ENCODE measurements at regions of chr2 and their contacts with region 1.

Region 1: DNA sequence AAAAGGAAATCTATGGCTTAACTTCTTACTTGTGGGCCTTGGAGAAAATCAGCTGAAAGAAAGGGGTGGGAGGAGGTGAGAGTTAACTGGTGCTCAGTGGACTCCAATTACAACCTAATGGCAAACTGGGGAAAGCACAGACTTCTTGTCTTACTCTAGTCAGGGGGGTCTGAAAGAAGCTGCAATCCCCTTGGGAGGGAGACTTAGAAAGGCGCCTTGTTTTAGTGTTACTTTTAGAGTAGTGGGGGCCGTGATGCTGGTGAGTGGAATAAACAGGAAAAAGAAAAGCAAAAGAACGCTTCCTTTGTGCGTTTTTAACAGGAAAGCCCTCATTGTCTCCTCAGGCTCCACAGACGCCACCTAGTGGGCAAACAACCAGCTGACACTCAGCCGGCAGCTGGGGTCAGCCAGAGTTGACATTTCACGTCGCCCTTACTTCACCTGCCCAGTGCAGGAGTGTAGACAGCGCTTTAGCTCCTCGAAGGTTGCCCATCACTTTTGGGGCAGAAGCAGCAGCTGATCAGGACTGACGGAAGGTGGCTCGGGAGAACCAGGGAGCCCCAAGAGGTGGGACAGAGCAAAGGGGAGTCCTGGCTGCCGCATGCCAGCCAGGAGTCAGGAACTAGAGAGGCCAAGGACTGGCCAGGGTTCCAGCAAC is 55.9 kb upstream of the GORASP2 start:
- DNase-seq: peak; percentile 80
- H3K4me3 Mint-ChIP-seq: peak overlapping the region; percentile 51
- H3K27ac Mint-ChIP-seq: peak overlapping the region; percentile 11
- H3K4me1 Mint-ChIP-seq: peaks cover 12% of the 10 kb centered on the region
- H3K27me3 Mint-ChIP-seq: peaks cover 10% of the 10 kb centered on the region

Region 2: DNA sequence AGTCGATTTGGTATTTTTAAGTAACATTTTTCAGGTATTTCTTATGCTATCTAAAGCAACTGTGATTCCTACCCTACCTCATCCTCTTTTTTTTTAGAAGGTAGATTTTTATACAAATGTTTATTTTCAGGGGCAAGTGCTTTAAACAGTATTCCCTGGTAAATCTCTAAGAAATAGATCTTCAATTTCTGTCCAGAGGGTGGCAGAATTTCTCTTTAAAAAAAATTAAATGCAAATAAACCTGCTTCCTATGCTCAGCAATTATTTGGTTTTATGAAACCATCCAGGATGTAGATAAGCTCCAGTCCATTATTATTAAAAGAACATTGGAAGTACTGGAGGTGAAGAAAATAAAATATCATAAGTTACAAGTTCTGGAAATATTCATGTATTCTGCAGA is 503.3 kb before region 1 on chr2:
- CTCF ChIA-PET with region 1: interaction called, 10 read pairs
- POLR2A ChIA-PET with region 1: no interaction called
- DNase-seq: no peak
- H3K4me3 Mint-ChIP-seq: no peak overlapping the region
- H3K27ac Mint-ChIP-seq: no peak overlapping the region
- H3K4me1 Mint-ChIP-seq: peaks cover 30% of the 10 kb centered on the region
- H3K27me3 Mint-ChIP-seq: peaks cover 17% of the 10 kb centered on the region

Region 3: GRCh38 chr2:170815746-170816503 is 57.2 kb before region 1 on chr2:
- CTCF ChIA-PET with region 1: interaction called, 15 read pairs
- POLR2A ChIA-PET with region 1: no interaction called
- DNase-seq: peak; percentile 65
- H3K4me3 Mint-ChIP-seq: peak overlapping the region; percentile 65
- H3K27ac Mint-ChIP-seq: peak overlapping the region; percentile 22
- H3K4me1 Mint-ChIP-seq: peaks cover 48% of the 10 kb centered on the region
- H3K27me3 Mint-ChIP-seq: peaks cover 85% of the 10 kb centered on the region

Region 4: DNA sequence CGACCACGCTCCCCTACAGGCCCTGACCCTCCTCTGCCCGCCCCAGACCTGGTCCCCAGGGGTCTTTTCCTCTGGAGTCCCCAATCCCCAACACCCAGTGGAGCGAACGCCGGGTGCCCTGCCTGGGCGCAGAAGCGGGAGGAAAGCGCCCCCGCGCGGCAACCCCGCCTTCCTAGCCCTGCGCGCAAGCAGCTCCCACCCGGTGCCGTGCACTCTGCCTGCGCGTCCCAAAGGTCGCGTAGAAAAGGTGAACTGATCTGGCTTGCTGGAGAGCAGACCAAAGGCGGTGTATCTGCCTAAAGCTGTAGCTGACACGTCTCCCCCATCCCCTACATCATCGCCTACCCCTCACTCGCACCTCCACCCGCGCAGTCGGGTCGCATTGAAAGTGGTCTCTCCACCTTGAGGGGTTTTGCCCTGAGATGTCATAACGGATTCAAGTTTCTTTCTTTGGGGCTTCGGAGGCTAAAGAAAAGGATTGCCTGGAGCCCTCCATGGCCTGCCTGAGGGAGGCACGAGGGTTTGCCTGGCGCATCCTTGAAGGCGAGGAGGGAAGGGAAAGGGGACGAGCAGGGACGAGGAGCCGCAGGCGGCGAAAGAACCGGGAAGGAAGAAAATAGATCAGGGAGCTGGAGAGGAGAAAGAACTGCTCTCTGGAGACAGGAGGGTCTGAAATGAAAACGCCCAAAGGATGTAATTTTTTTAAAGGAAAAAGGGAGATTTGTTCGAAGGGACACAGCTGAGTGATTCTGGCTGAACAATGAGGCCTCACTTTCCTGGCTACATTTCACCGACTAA is 50.7 kb before region 1 on chr2:
- CTCF ChIA-PET with region 1: interaction called, 11 read pairs
- POLR2A ChIA-PET with region 1: no interaction called
- DNase-seq: no peak
- H3K4me3 Mint-ChIP-seq: no peak overlapping the region
- H3K27ac Mint-ChIP-seq: no peak overlapping the region
- H3K4me1 Mint-ChIP-seq: peaks cover 40% of the 10 kb centered on the region
- H3K27me3 Mint-ChIP-seq: peaks cover 81% of the 10 kb centered on the region

Region 5: GRCh38 chr2:170843656-170844055 is 29.5 kb before region 1 on chr2:
- CTCF ChIA-PET with region 1: interaction called, 26 read pairs
- POLR2A ChIA-PET with region 1: no interaction called
- DNase-seq: no peak
- H3K4me3 Mint-ChIP-seq: no peak overlapping the region
- H3K27ac Mint-ChIP-seq: no peak overlapping the region
- H3K4me1 Mint-ChIP-seq: peaks cover 14% of the 10 kb centered on the region
- H3K27me3 Mint-ChIP-seq: peaks cover 6% of the 10 kb centered on the region

Region 6: GRCh38 chr2:170862286-170862902 is 10.8 kb before region 1 on chr2:
- CTCF ChIA-PET with region 1: interaction called, 29 read pairs
- POLR2A ChIA-PET with region 1: no interaction called
- DNase-seq: no peak
- H3K4me3 Mint-ChIP-seq: no peak overlapping the region
- H3K27ac Mint-ChIP-seq: no peak overlapping the region
- H3K4me1 Mint-ChIP-seq: no peaks in the 10 kb centered on the region
- H3K27me3 Mint-ChIP-seq: peaks cover 12% of the 10 kb centered on the region